Sigmoid colon (tissue), 7 donors: ENCODE measurements at regions of chr16 and their contacts with region 1.

Region 1: GRCh38 chr16:50152807-50153452 is at the start of gene TENT4B:
- DNase-seq: peak; percentile 94
- H3K4me3 ChIP-seq: peak within 1 kb of the TSS; percentile 93 to 98 (median 96)
- H3K27ac ChIP-seq: peak within 1 kb of the TSS; percentile 89 to 96 (median 94)
- H3K4me1 ChIP-seq: peaks cover 0 to 41% (median 29%) of the 10 kb centered on the region in 4 donors
- H3K27me3 ChIP-seq: no peaks in the 10 kb centered on the region
- CTCF ChIP-seq: no peak
- EP300 ChIP-seq: no peak
- POLR2A ChIP-seq: peak; percentile 50 to 66
- total RNA-seq, gene TENT4B: 14.9 to 23.5 (median 20.0) TPM

Region 2: GRCh38 chr16:48499923-48500381 is 1653.0 kb before region 1 on chr16:
- intact Hi-C with region 1: no loop called
- DNase-seq: peak; percentile 86
- H3K4me3 ChIP-seq: no peak overlapping the region
- H3K27ac ChIP-seq: peak overlapping the region; percentile 47 to 67 (median 62)
- H3K4me1 ChIP-seq: peaks cover 0 to 31% (median 27%) of the 10 kb centered on the region in 4 donors
- H3K27me3 ChIP-seq: no peaks in the 10 kb centered on the region
- CTCF ChIP-seq: no peak
- EP300 ChIP-seq: no peak
- POLR2A ChIP-seq: no peak

Region 3: DNA sequence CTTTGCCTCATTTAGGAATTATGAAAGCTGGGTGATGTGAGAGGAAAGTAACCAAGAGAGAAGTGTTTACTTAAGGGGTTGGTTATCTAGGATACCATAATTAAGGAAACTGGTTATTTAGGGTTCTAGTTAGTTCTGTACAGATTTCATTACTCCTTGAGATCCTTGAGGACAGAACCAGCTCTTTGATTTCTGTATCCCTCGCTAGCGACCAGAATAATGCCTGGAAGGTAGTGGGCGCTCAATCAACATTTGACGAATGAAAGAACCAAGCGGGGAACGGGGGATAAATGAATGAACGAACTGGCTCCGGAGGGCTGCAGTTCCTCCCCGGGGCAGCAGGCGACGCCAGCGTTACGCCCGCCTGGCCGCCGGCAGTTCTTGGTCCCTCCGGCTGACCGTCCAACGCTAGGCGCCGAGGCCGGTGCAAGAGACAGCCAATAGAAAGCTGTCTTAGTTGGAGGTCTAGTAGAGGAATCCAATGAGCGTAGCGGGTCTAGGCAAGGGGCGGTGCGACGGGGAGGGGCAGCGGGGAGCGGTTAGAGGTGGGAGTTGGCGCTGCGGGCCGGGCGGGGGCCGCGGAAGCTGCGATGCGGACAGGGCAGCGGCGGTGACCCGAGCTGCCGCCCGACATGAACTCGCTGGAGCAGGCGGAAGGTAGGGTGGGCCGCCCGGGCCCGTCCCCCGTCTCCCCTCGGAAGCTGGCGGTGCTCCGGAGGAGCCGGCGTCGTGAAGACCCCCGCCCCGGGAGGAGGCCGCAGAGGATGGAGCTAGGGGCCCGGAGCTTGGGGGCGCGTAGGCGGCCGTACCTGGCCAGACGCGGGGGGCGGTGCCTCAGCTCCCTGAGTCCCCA is 128.0 kb before region 1 on chr16 and contains the start of gene CNEP1R1:
- intact Hi-C with region 1: loop called (anchors 2 kb)
- DNase-seq: peak; percentile 98
- H3K4me3 ChIP-seq: peak within 1 kb of the TSS; percentile 89 to 100 (median 100)
- H3K27ac ChIP-seq: peak within 1 kb of the TSS; percentile 84 to 91 (median 88)
- H3K4me1 ChIP-seq: peaks cover 0 to 35% (median 21%) of the 10 kb centered on the region in 4 donors
- H3K27me3 ChIP-seq: no peaks in the 10 kb centered on the region
- CTCF ChIP-seq: peak; percentile 99 to 100 (median 100)
- EP300 ChIP-seq: peak in 1 of 4 donors; percentile 44
- POLR2A ChIP-seq: peak; percentile 38 to 53
- total RNA-seq, gene CNEP1R1: 10.2 to 18.9 (median 14.1) TPM